ENCODE measurements at regions of chr9 and their contacts with region 1.

Region 1: DNA sequence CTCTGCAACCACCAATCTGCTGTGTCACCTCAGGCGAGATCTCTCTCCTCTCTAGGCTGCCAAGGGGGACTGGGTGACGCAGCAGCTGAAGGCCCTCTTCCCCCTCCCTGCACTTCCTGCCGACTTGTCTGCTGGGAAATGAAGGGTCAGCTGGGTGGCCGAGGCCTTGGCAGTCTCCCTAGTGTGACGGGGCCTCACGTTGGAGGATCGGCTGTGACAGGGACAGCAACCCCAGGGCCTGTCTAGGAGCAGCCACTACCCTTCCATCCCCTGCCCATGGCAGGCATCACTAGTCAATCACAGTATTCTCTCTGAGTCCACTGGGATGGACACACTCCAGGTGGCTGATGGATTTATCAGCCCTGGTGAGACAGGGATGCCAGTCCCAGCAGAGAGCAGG is 107.3 kb upstream of the SARDH start:
- DNase-seq: peak; percentile 91 to 94 (median 93)
- H3K4me3 ChIP-seq: peak overlapping the region; percentile 12 to 79 (median 33)
- H3K4me3 Mint-ChIP-seq: peak overlapping the region; percentile 75 to 88
- H3K27ac ChIP-seq: peak overlapping the region; percentile 78 to 98
- H3K27ac Mint-ChIP-seq: peak overlapping the region; percentile 96 to 99 (median 98)
- H3K4me1 ChIP-seq: peaks cover 36 to 43% of the 10 kb centered on the region in 2 donors
- H3K4me1 Mint-ChIP-seq: peaks cover 46% of the 10 kb centered on the region
- H3K27me3 ChIP-seq: no peaks in the 10 kb centered on the region
- H3K27me3 Mint-ChIP-seq: peaks cover 0 to 5% (median 4%) of the 10 kb centered on the region in 3 donors
- CTCF ChIP-seq: no peak

Region 2: DNA sequence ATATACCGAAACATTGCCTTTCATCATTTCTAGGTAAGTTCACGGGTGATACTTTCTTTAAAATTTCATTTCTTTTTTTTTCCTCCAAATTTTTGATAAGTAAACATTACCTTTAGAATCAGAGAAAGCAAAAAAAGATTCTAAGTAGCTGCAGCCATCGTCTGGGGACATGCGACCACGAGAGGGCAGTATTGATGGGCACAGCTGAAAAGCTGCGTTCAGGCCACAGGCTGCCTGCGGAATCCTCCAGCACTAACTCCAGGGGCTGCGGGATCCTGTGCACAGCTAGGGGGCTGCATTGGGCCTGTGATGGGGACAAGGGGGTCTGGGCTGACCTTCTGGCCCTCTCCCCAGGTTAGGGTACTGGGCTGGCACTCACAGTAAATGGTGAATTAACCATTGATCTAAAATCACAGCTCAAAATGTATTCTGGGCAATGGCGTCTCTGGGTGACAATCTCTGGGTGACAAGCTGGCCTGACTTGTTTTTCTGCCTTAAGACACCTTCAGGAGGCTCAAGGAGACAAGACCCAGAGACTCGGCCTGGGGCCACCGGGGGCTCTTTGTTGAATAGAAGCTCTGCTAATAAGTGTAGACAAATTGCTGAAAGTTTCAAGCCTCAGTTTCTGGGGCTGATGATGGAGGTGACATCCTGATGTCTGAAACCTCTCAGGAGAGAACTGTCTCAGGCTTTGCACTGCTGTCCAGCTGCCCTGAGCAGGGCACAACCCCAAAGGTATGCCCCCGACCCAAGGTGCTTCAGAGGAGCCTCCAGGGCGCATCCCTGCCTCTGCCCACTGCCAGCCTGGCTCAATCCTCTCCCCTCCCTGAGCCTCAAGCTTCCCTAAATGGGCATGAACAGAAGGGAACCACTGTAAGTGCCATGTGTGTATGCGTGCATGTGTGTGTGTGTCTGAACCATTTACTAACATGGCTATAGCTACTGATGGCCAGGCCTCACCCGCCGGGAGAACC is 63.0 kb before region 1 on chr9:
- intact Hi-C with region 1: no loop called
- DNase-seq: peak; percentile 61 to 63 (median 63)
- H3K4me3 ChIP-seq: no peak overlapping the region
- H3K4me3 Mint-ChIP-seq: no peak overlapping the region
- H3K27ac ChIP-seq: no peak overlapping the region
- H3K27ac Mint-ChIP-seq: peak overlapping the region in 2 of 7 donors; percentile 15 to 24
- H3K4me1 ChIP-seq: peaks cover 29 to 39% of the 10 kb centered on the region in 2 donors
- H3K4me1 Mint-ChIP-seq: peaks cover 40% of the 10 kb centered on the region
- H3K27me3 ChIP-seq: no peaks in the 10 kb centered on the region
- H3K27me3 Mint-ChIP-seq: peaks cover 0 to 2% (median 2%) of the 10 kb centered on the region in 3 donors
- CTCF ChIP-seq: peak; percentile 79

Region 3: GRCh38 chr9:133825555-133826208 is 19.8 kb before region 1 on chr9:
- intact Hi-C with region 1: no loop called
- DNase-seq: peak; percentile 30 to 61 (median 43)
- H3K4me3 ChIP-seq: no peak overlapping the region
- H3K4me3 Mint-ChIP-seq: no peak overlapping the region
- H3K27ac ChIP-seq: peak overlapping the region in 1 of 2 donors; percentile 49
- H3K27ac Mint-ChIP-seq: peak overlapping the region in 6 of 7 donors; percentile 26 to 69 (median 48)
- H3K4me1 ChIP-seq: peaks cover 17 to 40% of the 10 kb centered on the region in 2 donors
- H3K4me1 Mint-ChIP-seq: peaks cover 37% of the 10 kb centered on the region
- H3K27me3 ChIP-seq: no peaks in the 10 kb centered on the region
- H3K27me3 Mint-ChIP-seq: peaks cover 0 to 4% (median 0%) of the 10 kb centered on the region in 3 donors
- CTCF ChIP-seq: no peak

Region 4: DNA sequence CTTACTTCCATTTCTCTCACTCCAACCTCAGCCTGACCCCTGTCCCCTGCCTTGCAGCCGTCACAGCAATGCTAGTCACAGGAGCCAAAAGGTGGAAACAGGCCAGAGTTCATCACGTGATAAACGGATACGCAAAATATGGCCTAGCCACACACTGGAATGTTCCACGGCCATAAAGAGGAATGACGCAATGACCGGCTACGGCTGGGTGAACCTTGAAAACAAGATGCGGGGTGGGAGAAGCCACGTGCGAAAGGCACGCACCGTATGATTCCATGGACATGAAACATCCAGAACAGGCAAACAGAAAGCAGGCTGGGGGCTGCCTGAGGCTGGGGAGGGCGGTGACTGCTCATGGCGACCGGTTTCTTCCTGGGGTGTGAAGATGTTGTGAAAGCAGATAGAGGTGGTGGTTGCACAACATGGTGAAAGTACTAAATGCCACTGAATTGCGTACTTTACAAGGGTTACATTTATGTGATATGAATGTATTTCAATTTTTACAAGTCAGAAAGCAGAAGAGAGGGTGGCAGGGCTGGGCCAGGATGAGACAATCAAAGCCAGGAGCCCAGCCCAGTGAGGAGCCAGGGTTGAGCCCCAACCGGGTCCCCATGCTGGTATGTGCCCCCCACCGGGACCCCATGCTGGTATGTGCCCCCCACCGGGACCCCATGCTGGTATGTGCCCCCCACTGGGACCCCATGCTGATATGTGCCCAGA is 10.5 kb after region 1 on chr9:
- intact Hi-C with region 1: loop called in 1 of 2 experiments (anchors 1 kb)
- DNase-seq: peak; percentile 96 to 99 (median 97)
- H3K4me3 ChIP-seq: peak overlapping the region in 1 of 3 experiments; percentile 50
- H3K4me3 Mint-ChIP-seq: peak overlapping the region; percentile 42 to 75
- H3K27ac ChIP-seq: peak overlapping the region; percentile 98
- H3K27ac Mint-ChIP-seq: peak overlapping the region; percentile 100
- H3K4me1 ChIP-seq: peaks cover 47 to 63% of the 10 kb centered on the region in 2 donors
- H3K4me1 Mint-ChIP-seq: peaks cover 66% of the 10 kb centered on the region
- H3K27me3 ChIP-seq: no peaks in the 10 kb centered on the region
- H3K27me3 Mint-ChIP-seq: peaks cover 2 to 4% (median 2%) of the 10 kb centered on the region in 3 donors
- CTCF ChIP-seq: no peak

Measured in CD14-positive monocyte (primary cell).